ENCODE measurements at regions of chr4 and their contacts with region 1.

Region 1: DNA sequence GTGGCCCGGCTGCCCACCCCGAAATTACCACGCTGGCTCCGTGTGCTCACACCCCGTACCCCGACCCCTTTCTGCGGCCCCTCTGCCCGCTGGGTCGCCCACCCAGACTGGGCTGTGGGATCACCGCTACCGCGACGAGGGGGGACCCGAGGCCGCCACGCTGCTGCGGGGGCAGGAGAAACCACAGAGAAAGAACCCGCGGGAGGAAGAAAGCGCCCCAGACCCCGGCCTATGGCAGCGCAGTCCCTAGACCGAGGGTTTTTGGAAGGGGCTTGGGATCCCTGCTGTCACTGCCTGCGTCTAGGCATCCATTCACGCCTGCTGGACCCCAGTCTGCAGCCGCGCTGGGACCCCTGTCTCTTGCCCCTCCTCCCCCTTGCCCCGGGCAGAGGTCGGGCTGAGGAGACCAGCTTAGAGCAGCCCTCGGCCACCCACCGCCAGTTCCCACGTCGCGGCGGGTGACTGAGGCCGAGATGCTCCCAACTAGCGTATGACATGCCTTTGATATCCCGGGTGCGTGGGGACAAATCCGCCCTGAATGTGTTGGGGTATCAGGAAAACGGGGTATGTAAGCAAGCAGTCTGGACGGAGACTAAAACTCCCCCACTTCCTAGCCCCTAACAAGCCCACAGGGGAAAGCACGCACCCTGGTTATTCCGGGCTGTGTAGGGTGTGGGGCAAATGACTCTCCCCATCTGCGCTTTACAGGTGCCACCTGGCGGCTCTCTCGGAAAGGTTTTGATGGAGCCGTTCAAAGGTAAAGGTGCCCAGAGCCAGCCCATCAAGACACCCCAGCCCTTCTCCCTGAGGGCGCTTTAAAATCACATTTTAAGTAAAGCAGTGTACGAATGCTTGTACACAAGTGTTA is 862 bp upstream of the INPP4B start:
- DNase-seq: peak; percentile 39
- H3K4me3 ChIP-seq: peak overlapping the region; percentile 80
- H3K27ac ChIP-seq: no peak overlapping the region
- H3K4me1 ChIP-seq: peaks cover 27% of the 10 kb centered on the region
- H3K27me3 ChIP-seq: no peaks in the 10 kb centered on the region

Region 2: GRCh38 chr4:141158219-141158618 is 1688.7 kb before region 1 on chr4:
- in situ Hi-C with region 1: loop called (anchors 25 kb)
- DNase-seq: peak; percentile 68
- H3K4me3 ChIP-seq: no peak overlapping the region
- H3K27ac ChIP-seq: no peak overlapping the region
- H3K4me1 ChIP-seq: peaks cover 9% of the 10 kb centered on the region; the same call in 1 of the 2 replicates
- H3K27me3 ChIP-seq: no peaks in the 10 kb centered on the region

Region 3: GRCh38 chr4:141346144-141346543 is 1500.8 kb before region 1 on chr4:
- in situ Hi-C with region 1: loop called (anchors 25 kb)
- DNase-seq: peak; percentile 83
- H3K4me3 ChIP-seq: no peak overlapping the region
- H3K27ac ChIP-seq: no peak overlapping the region
- H3K4me1 ChIP-seq: peaks cover 22% of the 10 kb centered on the region
- H3K27me3 ChIP-seq: no peaks in the 10 kb centered on the region

Region 4: GRCh38 chr4:142130666-142131065 is 716.3 kb before region 1 on chr4:
- in situ Hi-C with region 1: loop called (anchors 10 kb)
- DNase-seq: no peak
- H3K4me3 ChIP-seq: no peak overlapping the region
- H3K27ac ChIP-seq: no peak overlapping the region
- H3K4me1 ChIP-seq: peaks cover 18% of the 10 kb centered on the region; the same call in 1 of the 2 replicates
- H3K27me3 ChIP-seq: no peaks in the 10 kb centered on the region

Region 5: GRCh38 chr4:142353149-142353738 is 493.7 kb before region 1 on chr4:
- in situ Hi-C with region 1: loop called (anchors 10 kb)
- DNase-seq: peak; percentile 83
- H3K4me3 ChIP-seq: 0 out of 2 replicates have a peak overlapping the region, but pooled peaks have one; percentile 5
- H3K27ac ChIP-seq: peak overlapping the region; percentile 40
- H3K4me1 ChIP-seq: peaks cover 52% of the 10 kb centered on the region
- H3K27me3 ChIP-seq: no peaks in the 10 kb centered on the region

Region 6: GRCh38 chr4:142600971-142601370 is 246.0 kb before region 1 on chr4:
- in situ Hi-C with region 1: no loop called
- DNase-seq: peak; percentile 25
- H3K4me3 ChIP-seq: peak overlapping the region; percentile 58
- H3K27ac ChIP-seq: peak overlapping the region; percentile 30
- H3K4me1 ChIP-seq: peaks cover 10% of the 10 kb centered on the region
- H3K27me3 ChIP-seq: no peaks in the 10 kb centered on the region

Region 7: GRCh38 chr4:143095447-143095846 is 248.5 kb after region 1 on chr4:
- in situ Hi-C with region 1: no loop called
- DNase-seq: no peak
- H3K4me3 ChIP-seq: no peak overlapping the region
- H3K27ac ChIP-seq: no peak overlapping the region
- H3K4me1 ChIP-seq: no peaks in the 10 kb centered on the region
- H3K27me3 ChIP-seq: no peaks in the 10 kb centered on the region

Region 8: DNA sequence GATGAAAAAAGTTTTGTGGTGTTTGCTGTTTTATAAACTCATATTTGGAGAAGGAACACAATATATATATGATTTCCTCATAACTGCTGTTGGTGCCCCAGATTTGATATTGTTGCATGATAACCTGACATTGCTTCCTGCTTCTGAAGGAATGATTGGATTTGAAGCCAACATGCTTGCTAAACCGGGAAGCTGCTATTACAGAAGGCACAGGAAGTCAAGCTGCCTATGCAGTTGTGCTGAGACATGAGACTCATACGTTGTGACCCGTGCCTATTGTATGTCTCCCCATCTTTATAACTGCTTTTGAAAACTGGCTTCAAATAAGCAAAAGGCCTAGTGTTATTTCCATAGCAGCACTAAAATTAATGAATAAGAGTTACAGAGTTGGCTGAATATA is 522.6 kb after region 1 on chr4:
- in situ Hi-C with region 1: no loop called
- DNase-seq: no peak
- H3K4me3 ChIP-seq: no peak overlapping the region
- H3K27ac ChIP-seq: no peak overlapping the region
- H3K4me1 ChIP-seq: no peaks in the 10 kb centered on the region
- H3K27me3 ChIP-seq: no peaks in the 10 kb centered on the region

Measured in GM23248 (cell line).